Caco-2 (cell line): ENCODE measurements at regions of chr7 and their contacts with region 1.

Region 1: DNA sequence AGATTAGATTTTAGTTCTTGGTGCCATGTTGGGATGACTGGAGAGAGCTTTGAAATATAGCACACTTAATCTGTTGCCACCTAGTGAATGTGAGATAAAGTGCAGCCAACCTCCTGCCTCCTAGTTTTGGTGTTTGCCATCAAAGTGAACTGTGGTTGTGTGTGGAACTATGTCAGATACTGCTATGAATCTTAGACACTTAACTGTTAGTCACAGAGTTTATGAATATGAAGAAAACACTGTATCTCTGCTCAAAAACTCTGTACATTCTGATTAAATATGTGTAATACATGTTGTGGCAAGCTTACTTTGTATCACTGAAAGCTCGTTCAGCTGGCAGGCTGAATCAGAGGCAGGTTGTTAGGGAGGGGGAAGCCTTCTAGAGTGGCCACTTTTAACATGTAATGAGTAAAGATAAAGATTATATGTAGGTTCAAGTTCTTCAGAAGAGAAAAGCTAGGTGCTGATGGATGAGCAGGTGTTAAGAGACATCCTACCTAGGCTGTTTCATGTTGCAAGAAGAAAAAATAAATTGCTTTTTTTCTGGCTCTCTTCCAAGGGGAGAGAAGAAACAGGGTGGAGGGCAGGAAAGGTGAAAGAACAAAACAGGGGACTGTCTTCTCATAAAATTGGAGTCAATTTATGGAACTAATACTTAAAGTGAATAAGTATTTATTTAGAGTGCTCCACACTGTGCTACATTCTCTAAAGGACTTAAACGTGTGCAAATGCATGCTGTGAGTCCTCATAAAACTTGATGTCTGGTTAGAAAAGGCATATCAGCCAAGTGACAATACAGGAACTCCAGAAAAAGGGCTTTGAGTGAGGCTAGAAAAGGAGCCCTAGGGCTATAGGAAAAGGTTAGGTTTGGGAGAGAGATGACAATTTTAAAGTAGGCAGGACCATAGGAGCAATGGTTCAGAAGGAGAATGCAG is 14.1 kb upstream of the LAMB1 start:
- DNase-seq: peak in 1 of 2 experiments; percentile 38
- H3K4me3 ChIP-seq: no peak overlapping the region
- H3K4me3 Mint-ChIP-seq: no peak overlapping the region
- H3K27ac Mint-ChIP-seq: peak overlapping the region; percentile 6
- H3K4me1 ChIP-seq: peaks cover 57% of the 10 kb centered on the region
- H3K4me1 Mint-ChIP-seq: peaks cover 29% of the 10 kb centered on the region
- H3K27me3 ChIP-seq: no peaks in the 10 kb centered on the region
- H3K27me3 Mint-ChIP-seq: no peaks in the 10 kb centered on the region
- CTCF ChIP-seq: peak; percentile 54 to 55

Region 2: DNA sequence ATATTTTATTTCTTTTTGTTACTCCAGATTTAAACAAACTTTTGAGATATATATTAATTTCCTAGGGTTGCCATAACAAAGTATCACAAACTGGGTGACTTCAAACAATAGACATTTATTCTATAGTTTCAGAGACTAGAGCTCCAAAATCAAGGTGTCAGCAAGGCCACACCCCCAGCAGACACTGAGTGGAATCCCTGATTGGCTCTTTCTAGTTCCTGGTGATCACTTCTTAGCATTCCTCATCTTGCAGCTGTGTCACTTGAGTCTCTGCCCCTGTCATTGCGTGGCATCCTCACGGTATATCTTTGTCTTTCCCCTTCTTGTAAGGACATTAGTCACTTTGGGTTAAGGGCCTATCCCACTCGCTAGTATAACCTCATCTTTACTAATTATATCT is 206.5 kb before region 1 on chr7:
- CTCF ChIA-PET with region 1: no interaction called
- POLR2A ChIA-PET with region 1: no interaction called
- intact Hi-C with region 1: no loop called
- DNase-seq: no peak
- H3K4me3 ChIP-seq: no peak overlapping the region
- H3K4me3 Mint-ChIP-seq: no peak overlapping the region
- H3K27ac Mint-ChIP-seq: no peak overlapping the region
- H3K4me1 ChIP-seq: no peaks in the 10 kb centered on the region
- H3K4me1 Mint-ChIP-seq: no peaks in the 10 kb centered on the region
- H3K27me3 ChIP-seq: no peaks in the 10 kb centered on the region
- H3K27me3 Mint-ChIP-seq: no peaks in the 10 kb centered on the region
- CTCF ChIP-seq: no peak

Region 3: GRCh38 chr7:107966711-107967110 is 50.4 kb before region 1 on chr7:
- CTCF ChIA-PET with region 1: no interaction called
- POLR2A ChIA-PET with region 1: no interaction called
- intact Hi-C with region 1: loop called (anchors 2 kb)
- DNase-seq: peak; percentile 55 to 61
- H3K4me3 ChIP-seq: no peak overlapping the region
- H3K4me3 Mint-ChIP-seq: no peak overlapping the region
- H3K27ac Mint-ChIP-seq: no peak overlapping the region
- H3K4me1 ChIP-seq: peaks cover 43% of the 10 kb centered on the region
- H3K4me1 Mint-ChIP-seq: no peaks in the 10 kb centered on the region
- H3K27me3 ChIP-seq: no peaks in the 10 kb centered on the region
- H3K27me3 Mint-ChIP-seq: no peaks in the 10 kb centered on the region
- CTCF ChIP-seq: peak in 1 of 2 experiments; percentile 1

Region 4: GRCh38 chr7:108002726-108003598 is 14.1 kb before region 1 on chr7 and contains the start of gene LAMB1:
- CTCF ChIA-PET with region 1: interaction called, 11 read pairs
- POLR2A ChIA-PET with region 1: interaction called, 13 read pairs
- intact Hi-C with region 1: loop called (anchors 1 kb)
- DNase-seq: peak; percentile 93 to 94
- H3K4me3 ChIP-seq: peak within 1 kb of the TSS; percentile 94
- H3K4me3 Mint-ChIP-seq: peak within 1 kb of the TSS; percentile 79
- H3K27ac Mint-ChIP-seq: peak within 1 kb of the TSS; percentile 83
- H3K4me1 ChIP-seq: peaks cover 70% of the 10 kb centered on the region
- H3K4me1 Mint-ChIP-seq: peaks cover 38% of the 10 kb centered on the region
- H3K27me3 ChIP-seq: no peaks in the 10 kb centered on the region
- H3K27me3 Mint-ChIP-seq: no peaks in the 10 kb centered on the region
- CTCF ChIP-seq: no peak
- total RNA-seq, gene LAMB1: 418 and 431 TPM in 2 replicates

Region 5: GRCh38 chr7:108034586-108034985 is 17.5 kb after region 1 on chr7:
- CTCF ChIA-PET with region 1: interaction called, 6 read pairs
- POLR2A ChIA-PET with region 1: interaction called, 3 read pairs
- intact Hi-C with region 1: loop called (anchors 1 kb)
- DNase-seq: peak; percentile 82 to 85
- H3K4me3 ChIP-seq: no peak overlapping the region
- H3K4me3 Mint-ChIP-seq: peak overlapping the region; percentile 64
- H3K27ac Mint-ChIP-seq: peak overlapping the region; percentile 82
- H3K4me1 ChIP-seq: peaks cover 71% of the 10 kb centered on the region
- H3K4me1 Mint-ChIP-seq: peaks cover 46% of the 10 kb centered on the region
- H3K27me3 ChIP-seq: no peaks in the 10 kb centered on the region
- H3K27me3 Mint-ChIP-seq: no peaks in the 10 kb centered on the region
- CTCF ChIP-seq: no peak

Region 6: GRCh38 chr7:108525985-108526767 is 509.1 kb after region 1 on chr7 and contains the start of gene PNPLA8:
- CTCF ChIA-PET with region 1: no interaction called
- POLR2A ChIA-PET with region 1: no interaction called
- intact Hi-C with region 1: loop called (anchors 10 kb)
- DNase-seq: peak; percentile 99 to 100
- H3K4me3 ChIP-seq: peak within 1 kb of the TSS; percentile 74
- H3K4me3 Mint-ChIP-seq: peak within 1 kb of the TSS; percentile 98
- H3K27ac Mint-ChIP-seq: peak within 1 kb of the TSS; percentile 91
- H3K4me1 ChIP-seq: peaks cover 25% of the 10 kb centered on the region
- H3K4me1 Mint-ChIP-seq: peaks cover 36% of the 10 kb centered on the region
- H3K27me3 ChIP-seq: no peaks in the 10 kb centered on the region
- H3K27me3 Mint-ChIP-seq: no peaks in the 10 kb centered on the region
- CTCF ChIP-seq: no peak
- total RNA-seq, gene PNPLA8: 15.3 and 16.5 TPM in 2 replicates